Pancreas (tissue), 10 donors: ENCODE measurements at regions of chr18 and their contacts with region 1.

Region 1: GRCh38 chr18:67217551-67218166 is 298.9 kb downstream of the DSEL start:
- DNase-seq: peak in 3 of 6 donors; percentile 33 to 54 (median 41)
- ATAC-seq: peak; percentile 71 to 93 (median 92)
- H3K4me3 ChIP-seq: no peak overlapping the region
- H3K27ac ChIP-seq: no peak overlapping the region
- H3K4me1 ChIP-seq: no peaks in the 10 kb centered on the region
- H3K27me3 ChIP-seq: no peaks in the 10 kb centered on the region
- CTCF ChIP-seq: peak; percentile 44 to 78 (median 60)

Region 2: DNA sequence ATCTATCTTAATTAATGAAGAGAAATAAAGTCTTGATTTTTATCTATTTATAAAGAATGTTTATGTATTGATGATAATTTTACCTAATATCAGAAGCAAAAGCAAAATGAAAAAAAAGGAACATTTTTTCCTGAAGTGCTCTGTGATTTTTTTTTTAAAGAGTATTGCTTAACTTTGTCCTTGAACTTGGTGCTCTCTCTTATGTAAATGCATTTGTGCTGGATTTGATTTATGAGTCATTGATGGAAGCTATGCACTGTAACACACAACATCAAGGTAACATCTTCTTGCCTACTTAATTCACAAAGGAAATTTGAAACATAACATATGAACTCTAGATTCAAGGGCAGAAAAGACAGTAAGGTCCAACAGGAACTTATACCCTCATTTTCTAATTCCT is 300.8 kb before region 1 on chr18:
- intact Hi-C with region 1: no loop called
- DNase-seq: no peak
- ATAC-seq: no peak
- H3K4me3 ChIP-seq: no peak overlapping the region
- H3K27ac ChIP-seq: no peak overlapping the region
- H3K4me1 ChIP-seq: no peaks in the 10 kb centered on the region
- H3K27me3 ChIP-seq: no peaks in the 10 kb centered on the region
- CTCF ChIP-seq: no peak

Region 3: GRCh38 chr18:68660354-68661183 is 1442.9 kb after region 1 on chr18:
- intact Hi-C with region 1: loop called in 2 of 3 experiments (anchors 5 kb)
- DNase-seq: no peak
- ATAC-seq: peak in 2 of 4 donors; percentile 55 to 56
- H3K4me3 ChIP-seq: no peak overlapping the region
- H3K27ac ChIP-seq: no peak overlapping the region
- H3K4me1 ChIP-seq: no peaks in the 10 kb centered on the region
- H3K27me3 ChIP-seq: no peaks in the 10 kb centered on the region
- CTCF ChIP-seq: peak in 2 of 4 donors; percentile 34 to 38